ENCODE measurements at regions of chr1 and their contacts with region 1.

Region 1: DNA sequence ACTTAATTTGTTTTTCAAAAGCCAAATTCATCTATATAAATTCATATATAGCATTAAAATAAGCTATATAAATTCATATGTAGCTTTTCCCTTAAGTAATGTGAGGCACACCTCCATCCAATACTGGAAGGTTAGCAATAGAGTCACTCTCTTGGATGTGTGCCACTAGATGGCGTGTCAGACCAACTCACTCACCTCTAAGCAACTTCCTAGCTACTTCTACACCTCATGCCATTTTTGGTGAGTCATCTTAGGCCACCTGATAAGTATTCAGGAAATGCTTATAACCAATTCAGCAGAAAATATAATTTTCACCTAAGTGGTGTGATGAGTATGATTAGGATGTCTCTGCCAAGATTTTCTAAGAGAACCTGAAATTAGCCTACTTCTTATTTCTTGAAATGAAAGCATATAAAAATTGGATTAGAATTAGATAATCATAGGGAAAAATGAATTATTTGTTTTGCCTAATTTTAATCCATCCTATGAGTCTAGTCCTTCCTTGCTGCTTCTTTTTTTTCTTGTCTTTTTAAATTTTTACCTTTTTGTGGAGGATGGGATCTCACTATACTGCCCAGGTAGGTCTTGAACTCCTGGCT is 34.4 kb upstream of the TADA1 start:
- DNase-seq: peak; percentile 85
- H3K4me3 Mint-ChIP-seq: no peak overlapping the region
- H3K27ac Mint-ChIP-seq: no peak overlapping the region
- H3K4me1 Mint-ChIP-seq: peaks cover 31% of the 10 kb centered on the region
- H3K27me3 Mint-ChIP-seq: peaks cover 3% of the 10 kb centered on the region

Region 2: GRCh38 chr1:166432655-166433054 is 477.8 kb before region 1 on chr1:
- CTCF ChIA-PET with region 1: no interaction called
- POLR2A ChIA-PET with region 1: no interaction called
- DNase-seq: no peak
- H3K4me3 Mint-ChIP-seq: no peak overlapping the region
- H3K27ac Mint-ChIP-seq: no peak overlapping the region
- H3K4me1 Mint-ChIP-seq: no peaks in the 10 kb centered on the region
- H3K27me3 Mint-ChIP-seq: no peaks in the 10 kb centered on the region

Region 3: GRCh38 chr1:166811691-166812090 is 98.8 kb before region 1 on chr1:
- CTCF ChIA-PET with region 1: no interaction called
- POLR2A ChIA-PET with region 1: no interaction called
- DNase-seq: no peak
- H3K4me3 Mint-ChIP-seq: no peak overlapping the region
- H3K27ac Mint-ChIP-seq: no peak overlapping the region
- H3K4me1 Mint-ChIP-seq: no peaks in the 10 kb centered on the region
- H3K27me3 Mint-ChIP-seq: peaks cover 20% of the 10 kb centered on the region

Region 4: GRCh38 chr1:166875734-166876539 is 34.6 kb before region 1 on chr1 and contains the start of gene TADA1:
- CTCF ChIA-PET with region 1: interaction called, 14 read pairs
- POLR2A ChIA-PET with region 1: no interaction called
- DNase-seq: peak; percentile 99
- H3K4me3 Mint-ChIP-seq: peak within 1 kb of the TSS; percentile 93
- H3K27ac Mint-ChIP-seq: peak within 1 kb of the TSS; percentile 99
- H3K4me1 Mint-ChIP-seq: peaks cover 53% of the 10 kb centered on the region
- H3K27me3 Mint-ChIP-seq: peaks cover 6% of the 10 kb centered on the region
- total RNA-seq, gene TADA1: 17.0 to 18.8 TPM

Region 5: GRCh38 chr1:166920561-166921475 is 10.3 kb after region 1 on chr1:
- CTCF ChIA-PET with region 1: interaction called, 33 read pairs
- POLR2A ChIA-PET with region 1: no interaction called
- DNase-seq: no peak
- H3K4me3 Mint-ChIP-seq: no peak overlapping the region
- H3K27ac Mint-ChIP-seq: no peak overlapping the region
- H3K4me1 Mint-ChIP-seq: no peaks in the 10 kb centered on the region
- H3K27me3 Mint-ChIP-seq: peaks cover 33% of the 10 kb centered on the region

Region 6: DNA sequence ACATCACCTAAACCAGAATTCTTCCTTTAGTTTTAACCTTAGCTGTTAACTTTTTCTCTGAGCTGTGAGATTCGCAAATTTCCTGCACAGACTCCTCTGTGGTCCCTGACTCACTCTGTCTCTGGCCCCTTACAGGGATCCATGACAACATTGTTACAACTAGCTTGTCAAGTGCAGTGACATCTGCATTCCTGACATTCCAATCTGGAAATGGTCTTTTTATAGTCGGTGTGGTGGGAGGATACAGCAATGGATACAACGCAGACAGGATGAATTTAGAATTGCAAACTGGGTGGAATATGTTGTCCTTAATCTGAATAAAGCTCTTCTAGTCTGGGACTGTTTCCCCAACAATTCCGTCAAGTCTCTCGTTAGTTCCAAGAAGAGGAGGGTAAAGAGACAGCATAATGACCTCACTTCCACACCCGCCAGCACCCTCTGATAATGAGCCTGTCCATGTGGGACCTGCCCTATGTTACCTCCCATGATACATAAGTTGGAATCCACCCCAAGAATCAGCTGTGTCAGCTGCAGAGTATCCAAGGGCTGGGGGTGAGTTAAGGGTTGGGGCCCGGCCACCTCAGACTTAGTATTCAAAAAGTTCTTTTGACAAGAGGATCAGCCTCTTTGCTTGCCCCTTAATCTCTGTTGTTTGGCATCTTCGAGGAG is 15.4 kb after region 1 on chr1:
- CTCF ChIA-PET with region 1: interaction called, 33 read pairs
- POLR2A ChIA-PET with region 1: no interaction called
- DNase-seq: no peak
- H3K4me3 Mint-ChIP-seq: no peak overlapping the region
- H3K27ac Mint-ChIP-seq: no peak overlapping the region
- H3K4me1 Mint-ChIP-seq: no peaks in the 10 kb centered on the region
- H3K27me3 Mint-ChIP-seq: peaks cover 18% of the 10 kb centered on the region

Region 7: DNA sequence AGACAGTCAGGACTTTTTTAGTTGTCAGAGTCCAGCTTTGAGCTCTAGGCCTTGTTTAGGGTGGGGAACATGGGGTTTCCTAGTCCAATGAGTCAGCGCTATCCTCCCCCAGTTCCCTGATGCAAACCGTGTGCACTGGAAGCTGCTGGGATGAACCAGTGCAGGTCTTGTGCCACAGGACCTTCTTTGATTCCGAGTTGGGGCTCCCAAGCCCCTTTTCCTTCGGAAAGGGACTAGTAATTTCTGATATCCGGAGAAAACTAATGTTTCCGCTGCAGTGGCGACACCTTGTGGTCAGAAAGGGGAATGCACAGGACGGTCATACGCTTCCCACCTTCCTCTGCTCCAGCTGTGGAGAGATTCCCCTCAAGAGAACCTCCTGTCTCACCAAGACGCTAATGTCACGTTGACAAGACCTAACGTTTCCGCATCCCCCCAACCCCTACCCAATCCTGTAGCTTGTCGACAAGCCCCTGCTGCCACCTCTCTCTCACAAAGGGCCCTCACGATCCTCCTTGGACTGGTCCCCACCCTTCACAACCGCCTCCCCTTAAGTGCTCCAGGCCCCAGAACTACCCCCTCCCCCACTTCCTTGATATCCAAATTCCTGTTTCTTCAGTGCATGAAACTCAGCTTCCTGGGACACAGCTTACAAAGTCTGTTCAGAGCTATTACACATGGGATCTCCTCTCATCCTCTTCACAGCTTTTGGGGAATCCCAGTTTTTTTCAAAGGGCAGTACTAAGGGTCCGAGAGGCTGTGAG is 148.7 kb after region 1 on chr1:
- CTCF ChIA-PET with region 1: interaction called, 278 read pairs
- POLR2A ChIA-PET with region 1: interaction called, 9 read pairs
- DNase-seq: peak; percentile 73
- H3K4me3 Mint-ChIP-seq: no peak overlapping the region
- H3K27ac Mint-ChIP-seq: peak overlapping the region; percentile 4
- H3K4me1 Mint-ChIP-seq: peaks cover 20% of the 10 kb centered on the region
- H3K27me3 Mint-ChIP-seq: no peaks in the 10 kb centered on the region

Region 8: DNA sequence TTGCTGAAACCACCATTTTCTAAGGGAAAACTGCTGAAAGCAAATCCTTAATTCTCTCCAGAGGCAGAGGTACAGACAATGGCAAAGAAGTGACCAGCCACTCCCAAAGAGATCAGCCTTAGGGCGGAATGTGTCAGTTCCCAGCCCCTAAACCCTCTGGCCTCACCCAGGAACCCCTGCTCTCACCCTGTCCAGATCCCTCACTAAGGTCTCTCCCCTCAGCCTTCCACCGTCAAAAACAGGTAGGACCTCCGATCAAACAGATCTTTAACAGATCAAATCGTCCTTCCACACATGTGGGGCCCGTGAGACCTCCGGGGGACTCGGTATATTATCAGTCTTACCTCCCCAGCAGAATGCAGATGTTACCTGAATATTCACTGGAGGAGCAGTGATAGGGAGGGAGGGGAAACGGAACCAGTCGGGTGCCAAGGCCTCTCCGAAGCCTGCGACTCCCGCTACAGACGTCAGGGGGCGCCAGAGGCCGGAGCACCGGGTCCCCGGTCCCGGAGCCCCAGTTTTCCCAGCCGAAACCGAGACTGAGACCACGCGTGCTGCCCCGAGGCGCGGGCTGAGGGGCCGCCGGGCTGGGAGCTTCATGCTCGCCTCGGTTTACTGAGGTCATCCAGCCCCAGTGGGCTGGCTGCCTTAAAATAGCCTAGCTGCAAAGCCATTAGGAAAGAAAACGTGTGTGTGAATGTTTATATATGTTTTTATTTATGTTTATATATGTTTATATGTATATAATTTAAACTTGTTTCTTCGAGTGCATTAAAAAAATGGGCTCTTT is 156.0 kb after region 1 on chr1:
- CTCF ChIA-PET with region 1: interaction called, 278 read pairs
- POLR2A ChIA-PET with region 1: no interaction called
- DNase-seq: peak; percentile 78
- H3K4me3 Mint-ChIP-seq: no peak overlapping the region
- H3K27ac Mint-ChIP-seq: no peak overlapping the region
- H3K4me1 Mint-ChIP-seq: peaks cover 3% of the 10 kb centered on the region
- H3K27me3 Mint-ChIP-seq: no peaks in the 10 kb centered on the region

Measured in activated CD4-positive, alpha-beta T cell treated with anti-CD3 and anti-CD28 coated beads, Interleukin-2, amount 10 ng/mL, durations not matched to agents 7 days and 5 days (primary cell).